ENCODE measurements at regions of chr10 and their contacts with region 1.

Region 1: GRCh38 chr10:104274762-104275721 is 6.1 kb downstream of the GSTO2 start:
- DNase-seq: peak; percentile 46 to 91
- H3K4me3 ChIP-seq: peak overlapping the region; percentile 45 to 66 (median 54)
- H3K27ac ChIP-seq: no peak overlapping the region
- H3K4me1 ChIP-seq: peaks cover 0 to 1% (median 0%) of the 10 kb centered on the region in 4 experiments; a peak in 2 of 7 replicates
- H3K27me3 ChIP-seq: peaks cover 0 to 7% (median 2%) of the 10 kb centered on the region in 4 experiments; a peak in 2 of 7 replicates
- CTCF ChIP-seq: peak; percentile 87 to 92 (median 91)
- EP300 ChIP-seq: peak in 1 of 2 experiments; percentile 71; a peak in 1 of 3 replicates
- POLR2A ChIP-seq: peak in 1 of 2 experiments; percentile 64; a peak in 2 of 3 replicates
- RAD21 ChIP-seq: peak; percentile 63 to 73

Region 2: GRCh38 chr10:104045151-104046089 is 229.6 kb before region 1 on chr10:
- CTCF ChIA-PET with region 1: interaction called, 13 read pairs
- POLR2A ChIA-PET with region 1: no interaction called
- DNase-seq: peak; percentile 39 to 72
- H3K4me3 ChIP-seq: no peak overlapping the region
- H3K27ac ChIP-seq: no peak overlapping the region
- H3K4me1 ChIP-seq: peaks cover 0 to 4% (median 2%) of the 10 kb centered on the region in 4 experiments; a peak in 3 of 7 replicates
- H3K27me3 ChIP-seq: no peaks in the 10 kb centered on the region
- CTCF ChIP-seq: peak; percentile 66 to 90 (median 84)
- EP300 ChIP-seq: no peak
- POLR2A ChIP-seq: no peak
- RAD21 ChIP-seq: peak; percentile 93 to 97

Region 3: DNA sequence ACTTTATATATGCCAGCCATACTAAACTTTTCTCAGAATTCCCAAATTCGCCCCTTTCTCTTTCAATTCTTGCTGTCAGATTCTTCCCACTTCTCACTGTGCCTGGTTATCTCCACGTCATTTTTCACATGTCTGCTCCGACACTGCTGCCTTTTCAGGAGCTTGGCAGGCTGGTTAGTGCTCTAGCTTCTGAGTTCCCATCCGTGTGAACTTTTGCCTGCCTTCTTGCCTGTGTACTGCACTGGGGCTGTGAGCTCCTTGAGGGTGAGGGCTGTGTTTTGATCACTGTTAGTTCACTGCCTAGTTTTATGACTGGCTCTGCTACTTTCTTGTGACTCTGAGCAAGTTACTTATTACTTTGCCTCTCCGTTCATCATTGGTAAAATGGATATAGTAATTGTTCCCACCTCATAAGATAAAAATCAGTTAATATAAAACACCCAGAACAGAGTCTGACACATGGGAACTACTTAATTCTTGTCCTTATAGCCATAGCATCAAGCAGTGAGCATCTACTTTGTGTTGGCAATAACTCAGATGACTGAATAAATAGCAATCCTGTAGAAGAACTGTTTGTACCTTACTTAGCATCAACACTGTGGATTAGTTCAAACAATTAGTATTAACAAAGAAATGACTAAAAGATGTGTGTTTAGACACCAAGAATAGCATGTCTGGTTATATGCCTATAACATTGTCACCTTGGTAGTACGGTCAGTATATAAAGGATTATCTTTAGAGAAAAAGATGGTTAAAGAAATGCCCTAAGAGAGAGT is 14.9 kb before region 1 on chr10:
- CTCF ChIA-PET with region 1: interaction called, 21 read pairs
- POLR2A ChIA-PET with region 1: interaction called, 81 read pairs
- DNase-seq: no peak
- H3K4me3 ChIP-seq: no peak overlapping the region
- H3K27ac ChIP-seq: no peak overlapping the region
- H3K4me1 ChIP-seq: no peaks in the 10 kb centered on the region; a peak in 2 of 7 replicates
- H3K27me3 ChIP-seq: peaks cover 0 to 2% (median 0%) of the 10 kb centered on the region in 4 experiments; a peak in 1 of 7 replicates
- CTCF ChIP-seq: no peak
- EP300 ChIP-seq: no peak
- POLR2A ChIP-seq: no peak
- RAD21 ChIP-seq: no peak

Region 4: GRCh38 chr10:104297697-104298660 is 22.9 kb after region 1 on chr10:
- CTCF ChIA-PET with region 1: interaction called, 51 read pairs
- POLR2A ChIA-PET with region 1: interaction called, 7 read pairs
- DNase-seq: peak; percentile 50 to 93
- H3K4me3 ChIP-seq: no peak overlapping the region
- H3K27ac ChIP-seq: no peak overlapping the region
- H3K4me1 ChIP-seq: no peaks in the 10 kb centered on the region
- H3K27me3 ChIP-seq: no peaks in the 10 kb centered on the region
- CTCF ChIP-seq: peak; percentile 88 to 96 (median 94)
- EP300 ChIP-seq: no peak
- POLR2A ChIP-seq: no peak
- RAD21 ChIP-seq: peak; percentile 43 to 64

Region 5: GRCh38 chr10:104337974-104338735 is 63.1 kb after region 1 on chr10 and contains the start of gene ITPRIP:
- CTCF ChIA-PET with region 1: interaction called, 31 read pairs
- POLR2A ChIA-PET with region 1: interaction called, 5 read pairs
- DNase-seq: peak in 1 of 2 experiments; percentile 82
- H3K4me3 ChIP-seq: peak within 1 kb of the TSS; percentile 73 to 90 (median 80)
- H3K27ac ChIP-seq: peak within 1 kb of the TSS; percentile 87
- H3K4me1 ChIP-seq: peaks cover 18 to 32% (median 23%) of the 10 kb centered on the region in 4 experiments
- H3K27me3 ChIP-seq: peaks cover 0 to 2% (median 0%) of the 10 kb centered on the region in 4 experiments; a peak in 1 of 7 replicates
- CTCF ChIP-seq: peak in 2 of 3 experiments; percentile 21 to 32; a peak in 2 of 4 replicates
- EP300 ChIP-seq: no peak
- POLR2A ChIP-seq: peak in 1 of 2 experiments; percentile 79; a peak in 2 of 3 replicates
- RAD21 ChIP-seq: no peak
- total RNA-seq, gene ITPRIP: 16.9 and 17.1 TPM in 2 replicates

Region 6: DNA sequence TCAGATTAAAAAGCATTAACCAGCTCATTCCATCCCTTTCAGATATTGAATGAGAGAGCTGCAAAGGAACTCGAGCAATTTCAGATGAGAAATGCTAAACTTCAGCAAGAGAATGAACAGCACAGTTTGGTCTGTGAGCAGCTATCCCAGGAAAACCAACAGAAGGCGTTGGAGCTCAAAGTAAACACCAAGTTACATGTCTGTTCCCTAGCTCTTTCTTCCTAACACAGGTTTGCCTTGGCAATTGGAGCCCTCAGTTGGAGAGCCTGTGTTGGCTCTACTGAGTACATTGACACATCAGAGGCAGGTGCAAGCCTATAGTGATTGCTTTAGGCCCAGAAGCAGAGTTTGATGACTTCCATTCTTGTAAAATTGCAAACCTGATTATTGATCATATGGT is 93.3 kb after region 1 on chr10:
- CTCF ChIA-PET with region 1: interaction called, 11 read pairs
- POLR2A ChIA-PET with region 1: no interaction called
- DNase-seq: no peak
- H3K4me3 ChIP-seq: no peak overlapping the region
- H3K27ac ChIP-seq: no peak overlapping the region
- H3K4me1 ChIP-seq: peaks cover 0 to 3% (median 1%) of the 10 kb centered on the region in 4 experiments; a peak in 2 of 7 replicates
- H3K27me3 ChIP-seq: no peaks in the 10 kb centered on the region
- CTCF ChIP-seq: no peak
- EP300 ChIP-seq: no peak
- POLR2A ChIP-seq: no peak
- RAD21 ChIP-seq: no peak

Region 7: DNA sequence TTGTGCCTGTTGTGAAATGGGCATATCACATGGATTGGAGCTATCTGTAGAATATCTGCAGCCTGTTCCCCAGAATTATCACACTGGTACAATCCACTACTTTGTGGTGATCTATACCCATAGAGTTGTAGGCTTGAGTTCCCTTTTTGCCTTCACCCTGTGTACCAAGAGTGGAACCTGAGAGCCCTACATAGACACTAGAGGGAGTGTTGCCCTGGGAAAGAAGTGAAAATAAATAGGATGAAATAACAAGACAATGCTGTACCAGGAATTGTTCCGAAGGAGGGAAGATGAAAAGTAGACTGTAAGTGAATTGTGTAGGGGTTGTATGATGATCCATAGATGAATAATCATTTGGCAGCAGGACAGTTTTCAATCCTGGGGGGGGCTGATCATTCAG is 375.0 kb after region 1 on chr10:
- CTCF ChIA-PET with region 1: no interaction called
- POLR2A ChIA-PET with region 1: no interaction called
- DNase-seq: no peak
- H3K4me3 ChIP-seq: no peak overlapping the region
- H3K27ac ChIP-seq: no peak overlapping the region
- H3K4me1 ChIP-seq: no peaks in the 10 kb centered on the region
- H3K27me3 ChIP-seq: no peaks in the 10 kb centered on the region
- CTCF ChIP-seq: peak in 2 of 3 experiments; percentile 47 to 51; a peak in 2 of 4 replicates
- EP300 ChIP-seq: no peak
- POLR2A ChIP-seq: no peak
- RAD21 ChIP-seq: peak; percentile 71 to 75

Measured in H1 (cell line).